Breast epithelium (tissue), 4 donors: ENCODE measurements at regions of chr16 and their contacts with region 1.

Region 1: GRCh38 chr16:46836534-46837530 is 5.9 kb upstream of the C16orf87 start:
- DNase-seq: no peak
- H3K4me3 ChIP-seq: no peak overlapping the region
- H3K27ac ChIP-seq: no peak overlapping the region
- H3K4me1 ChIP-seq: no peaks in the 10 kb centered on the region
- H3K27me3 ChIP-seq: no peaks in the 10 kb centered on the region
- CTCF ChIP-seq: no peak
- POLR2A ChIP-seq: no peak

Region 2: GRCh38 chr16:46884513-46885293 is 47.9 kb after region 1 on chr16:
- intact Hi-C with region 1: no loop called
- DNase-seq: no peak
- H3K4me3 ChIP-seq: peak overlapping the region; percentile 72 to 85 (median 76)
- H3K27ac ChIP-seq: peak overlapping the region; percentile 39 to 76
- H3K4me1 ChIP-seq: peaks cover 0 to 5% of the 10 kb centered on the region in 2 donors
- H3K27me3 ChIP-seq: no peaks in the 10 kb centered on the region
- CTCF ChIP-seq: no peak
- POLR2A ChIP-seq: no peak

Region 3: DNA sequence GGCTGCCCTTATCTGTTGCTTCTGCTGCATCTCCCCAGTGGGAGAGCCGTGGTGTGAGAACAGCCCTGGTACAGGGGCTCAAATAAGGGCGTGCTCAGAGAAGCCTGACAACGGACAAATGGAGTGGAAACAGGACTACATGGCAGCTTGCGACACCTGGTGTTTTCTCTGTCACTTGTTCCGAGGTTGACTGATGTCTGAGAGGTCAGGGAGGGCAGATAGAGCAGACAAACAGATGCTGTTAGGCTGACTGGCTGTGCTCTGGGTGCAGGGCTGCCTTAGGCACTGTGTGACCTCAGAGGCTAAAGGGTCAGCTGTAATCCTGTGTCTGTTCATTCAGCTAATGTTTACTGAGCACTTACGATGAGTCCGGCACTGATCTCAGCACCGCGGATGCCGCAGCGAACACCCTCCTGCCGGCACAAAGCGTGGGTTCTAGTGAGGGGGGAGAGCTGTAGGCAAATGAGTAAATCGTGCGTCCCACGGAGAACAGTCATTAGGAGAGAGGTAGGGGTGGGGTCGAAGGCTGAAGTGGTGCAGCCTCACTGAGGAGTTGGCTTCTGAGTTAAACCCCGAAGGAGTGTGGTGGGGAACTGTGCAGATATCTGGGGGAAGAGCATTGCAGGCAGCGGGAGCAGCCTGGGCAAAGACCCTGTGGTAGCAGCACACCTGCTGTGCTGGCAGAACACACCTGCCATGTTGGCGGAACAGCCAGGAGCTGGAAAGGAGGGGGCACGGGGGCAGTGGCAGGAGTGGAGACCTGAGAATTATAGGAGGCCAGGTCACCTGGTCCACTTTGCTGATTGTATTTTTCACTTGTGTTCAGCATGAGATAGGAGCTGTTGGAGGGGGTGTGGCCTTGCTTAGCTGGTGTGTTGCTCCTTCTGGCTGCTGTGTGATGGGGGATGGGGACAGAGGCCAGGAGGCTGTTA is 82.3 kb after region 1 on chr16:
- intact Hi-C with region 1: loop called (anchors 1 kb)
- DNase-seq: no peak
- H3K4me3 ChIP-seq: no peak overlapping the region
- H3K27ac ChIP-seq: no peak overlapping the region
- H3K4me1 ChIP-seq: peaks cover 0 to 3% of the 10 kb centered on the region in 2 donors
- H3K27me3 ChIP-seq: no peaks in the 10 kb centered on the region
- CTCF ChIP-seq: no peak
- POLR2A ChIP-seq: no peak